ENCODE measurements at regions of chr16 and their contacts with region 1.

Region 1: DNA sequence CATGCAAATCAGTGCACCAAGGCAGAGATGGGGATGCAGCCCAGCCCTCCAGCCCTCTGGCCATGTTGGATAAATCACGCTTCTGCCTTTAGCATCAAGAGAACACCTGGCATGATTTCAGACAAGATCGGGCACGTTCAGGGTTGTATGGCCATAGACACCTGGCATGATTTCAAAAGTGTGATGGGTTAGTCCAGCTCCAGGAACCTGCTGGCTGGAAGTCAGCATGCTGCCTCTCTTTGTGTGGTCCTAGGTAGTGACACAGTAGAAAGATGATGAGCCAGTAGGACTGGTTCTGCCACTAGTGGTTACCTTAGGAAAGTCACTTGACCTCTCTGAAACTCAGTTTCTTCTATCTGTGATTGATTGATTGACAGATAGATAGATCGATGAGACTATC is 326.9 kb downstream of the NPIPA8 start:
- DNase-seq: no peak
- ATAC-seq: no peak
- H3K4me3 ChIP-seq: no peak overlapping the region
- H3K27ac ChIP-seq: no peak overlapping the region
- H3K4me1 ChIP-seq: no peaks in the 10 kb centered on the region
- H3K27me3 ChIP-seq: peaks cover 0 to 6% (median 0%) of the 10 kb centered on the region in 7 donors
- CTCF ChIP-seq: no peak

Region 2: GRCh38 chr16:17101646-17102045 is 908.0 kb before region 1 on chr16:
- intact Hi-C with region 1: loop called in 1 of 10 experiments (anchors 10 kb)
- DNase-seq: no peak
- ATAC-seq: no peak
- H3K4me3 ChIP-seq: no peak overlapping the region
- H3K27ac ChIP-seq: no peak overlapping the region
- H3K4me1 ChIP-seq: no peaks in the 10 kb centered on the region
- H3K27me3 ChIP-seq: peaks cover 0 to 11% (median 0%) of the 10 kb centered on the region in 7 donors
- CTCF ChIP-seq: no peak

Region 3: DNA sequence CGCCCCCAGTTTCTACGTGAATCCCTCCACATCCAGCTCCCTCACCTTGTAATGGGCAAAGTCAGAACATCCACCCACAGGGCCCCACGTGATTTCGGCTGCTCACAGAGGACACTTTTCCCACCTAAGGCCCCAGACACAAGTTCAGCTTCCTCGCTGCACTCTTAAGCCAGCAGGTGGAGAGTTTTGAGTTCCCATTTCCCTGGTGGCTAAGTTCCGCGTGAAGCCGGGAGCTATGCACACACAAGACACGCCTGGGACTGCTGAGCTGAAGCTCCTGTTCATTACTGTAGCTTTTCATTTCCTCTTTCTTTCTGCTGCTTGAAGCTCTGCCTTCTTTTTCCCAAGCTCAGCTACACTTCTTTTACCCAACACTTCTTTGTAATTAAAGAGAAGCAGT is 53.1 kb after region 1 on chr16:
- intact Hi-C with region 1: loop called in 1 of 10 experiments (anchors 5 kb)
- DNase-seq: no peak
- ATAC-seq: no peak
- H3K4me3 ChIP-seq: no peak overlapping the region
- H3K27ac ChIP-seq: no peak overlapping the region
- H3K4me1 ChIP-seq: no peaks in the 10 kb centered on the region
- H3K27me3 ChIP-seq: peaks cover 0 to 14% (median 5%) of the 10 kb centered on the region in 7 donors
- CTCF ChIP-seq: no peak

Measured in heart right ventricle (tissue), 16 donors.